Natural killer cell (primary cell): ENCODE measurements at regions of chr20 and their contacts with region 1.

Region 1: DNA sequence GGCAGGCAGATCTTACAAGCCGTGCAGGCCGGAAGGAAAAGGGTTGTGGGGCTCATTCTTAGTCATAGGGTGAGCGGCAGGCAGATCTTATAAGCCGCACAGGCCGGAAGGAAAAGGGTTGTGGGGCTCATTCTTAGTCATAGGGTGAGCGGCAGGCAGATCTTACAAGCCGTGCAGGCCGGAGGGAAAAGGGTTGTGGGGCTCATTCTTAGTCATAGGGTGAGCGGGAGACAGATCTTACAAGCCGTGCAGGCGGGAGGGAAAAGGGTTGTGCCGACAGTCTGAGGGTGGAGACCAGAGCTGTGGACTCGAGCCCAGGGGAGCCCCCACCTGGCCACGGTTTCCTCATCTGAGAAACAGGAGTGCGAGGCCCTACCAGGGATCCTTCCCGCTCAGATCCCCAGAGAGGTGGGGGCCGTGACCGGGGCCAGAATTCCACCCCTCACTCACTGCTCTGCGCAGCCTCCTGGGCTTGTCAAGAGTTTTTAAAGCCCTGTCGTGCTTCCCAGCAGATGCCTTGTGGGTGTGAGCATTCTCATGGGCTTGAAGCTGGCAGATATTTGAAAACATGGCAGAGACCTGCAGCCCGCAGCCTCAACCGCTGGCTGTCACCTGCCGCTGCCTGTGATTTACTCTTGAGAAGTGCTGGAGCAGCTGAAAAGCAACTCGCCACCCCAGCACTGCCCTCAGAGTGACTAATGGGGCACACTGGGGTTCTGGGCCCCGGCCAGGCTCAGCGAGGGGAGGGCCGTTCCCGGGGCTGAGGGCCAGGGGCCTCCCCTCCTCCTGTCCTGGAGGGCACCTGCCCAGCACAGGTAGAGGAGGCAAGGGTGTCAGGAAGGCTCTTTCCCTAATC is 31.9 kb downstream of the NTSR1 start:
- DNase-seq: peak; percentile 76 to 91
- ATAC-seq: peak; percentile 76 to 88 (median 80)
- H3K4me3 ChIP-seq: peak overlapping the region; percentile 22
- H3K4me3 Mint-ChIP-seq: peak overlapping the region; percentile 92
- H3K27ac ChIP-seq: peak overlapping the region; percentile 57
- H3K27ac Mint-ChIP-seq: peak overlapping the region; percentile 95
- H3K4me1 ChIP-seq: peaks cover 53% of the 10 kb centered on the region
- H3K4me1 Mint-ChIP-seq: peaks cover 12 to 30% of the 10 kb centered on the region in 2 donors
- H3K27me3 ChIP-seq: no peaks in the 10 kb centered on the region
- H3K27me3 Mint-ChIP-seq: peaks cover 0 to 3% of the 10 kb centered on the region in 2 donors
- CTCF ChIP-seq: no peak

Region 2: DNA sequence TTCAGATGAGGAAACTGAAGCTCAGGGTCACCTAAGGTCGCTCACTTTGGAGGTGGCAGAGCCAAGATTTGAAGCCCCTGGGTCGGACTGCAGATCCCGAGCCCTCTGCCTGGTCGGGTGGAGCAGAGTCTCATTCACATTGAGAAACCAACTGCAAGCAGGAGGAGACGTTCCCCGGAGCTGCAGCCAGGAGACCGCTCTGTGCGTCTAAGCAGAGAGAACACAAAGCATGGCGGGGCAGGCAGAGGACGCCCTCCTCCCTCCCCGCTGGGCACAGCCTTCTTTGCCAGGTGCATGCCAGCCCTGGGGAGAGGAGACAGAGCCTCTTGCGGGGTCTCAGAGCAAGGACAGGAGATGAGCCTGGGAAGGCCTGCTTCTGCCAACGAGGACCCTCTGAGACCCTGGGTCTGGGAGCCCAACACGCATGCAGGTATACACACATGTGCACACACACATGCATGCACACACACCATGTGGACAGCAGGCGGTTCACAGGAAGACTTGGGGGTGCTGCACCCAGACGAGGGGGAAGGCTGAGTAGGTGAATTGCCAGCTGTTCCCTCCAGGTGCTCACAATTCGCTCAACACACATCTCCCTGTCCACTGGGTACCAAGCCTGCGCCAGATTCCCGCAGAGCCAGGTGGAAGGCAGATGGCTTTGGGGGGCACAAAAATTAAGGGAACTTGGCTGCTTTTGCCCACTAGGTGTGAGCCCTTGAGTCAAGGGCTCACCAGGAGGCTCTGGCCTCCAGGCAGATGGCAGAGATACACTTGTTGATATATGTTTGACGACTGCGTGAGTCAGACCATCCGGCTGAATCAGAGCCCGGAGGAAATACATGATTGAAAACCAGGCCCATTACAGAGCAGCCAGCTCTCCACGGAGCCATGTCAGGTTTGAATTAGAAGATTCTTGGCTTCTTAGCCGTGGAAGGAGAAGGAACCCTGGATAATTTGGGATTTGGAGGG is 37.3 kb before region 1 on chr20:
- intact Hi-C with region 1: loop called (anchors 1 kb)
- DNase-seq: peak in 1 of 2 donors; percentile 34
- ATAC-seq: peak in 2 of 3 donors; percentile 60 to 79
- H3K4me3 ChIP-seq: no peak overlapping the region
- H3K4me3 Mint-ChIP-seq: no peak overlapping the region
- H3K27ac ChIP-seq: no peak overlapping the region
- H3K27ac Mint-ChIP-seq: peak overlapping the region in 1 of 2 donors; percentile 89
- H3K4me1 ChIP-seq: peaks cover 15% of the 10 kb centered on the region
- H3K4me1 Mint-ChIP-seq: peaks cover 0 to 19% of the 10 kb centered on the region in 2 donors
- H3K27me3 ChIP-seq: peaks cover 4% of the 10 kb centered on the region
- H3K27me3 Mint-ChIP-seq: peaks cover 7 to 14% of the 10 kb centered on the region in 2 donors
- CTCF ChIP-seq: no peak